ENCODE measurements at regions of chr2 and their contacts with region 1.

Region 1: GRCh38 chr2:204177977-204178540 is 241.5 kb downstream of the ICOS start:
- DNase-seq: peak; percentile 82
- H3K4me3 Mint-ChIP-seq: no peak overlapping the region
- H3K27ac Mint-ChIP-seq: no peak overlapping the region
- H3K4me1 Mint-ChIP-seq: peaks cover 3% of the 10 kb centered on the region
- H3K27me3 Mint-ChIP-seq: peaks cover 8% of the 10 kb centered on the region

Region 2: DNA sequence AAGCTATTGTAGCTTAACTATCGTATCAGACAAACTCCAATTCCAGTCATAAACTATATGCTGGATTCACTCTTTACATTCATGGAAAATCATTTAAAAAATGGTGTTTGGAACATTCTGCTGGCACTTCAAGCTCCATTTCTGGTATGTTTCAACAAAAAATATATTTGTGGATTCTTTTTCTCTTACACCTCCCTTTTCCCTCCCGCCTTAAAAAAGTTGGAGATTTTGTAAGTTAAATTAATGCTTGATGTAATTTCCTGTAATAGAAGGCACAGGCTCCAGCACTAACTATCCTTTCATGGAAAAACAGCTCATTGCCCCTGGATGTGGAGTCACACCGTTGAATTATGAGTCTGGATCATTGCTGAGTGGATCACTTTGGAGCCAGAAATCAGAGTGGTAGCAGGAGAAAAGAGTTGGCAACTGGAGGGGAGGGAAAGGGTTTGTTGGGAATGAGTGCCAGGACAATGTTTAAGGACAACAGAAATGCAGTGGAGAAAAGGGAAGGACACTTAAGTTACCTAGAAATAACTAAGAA is 138.7 kb before region 1 on chr2:
- CTCF ChIA-PET with region 1: interaction called, 12 read pairs
- POLR2A ChIA-PET with region 1: no interaction called
- intact Hi-C with region 1: no loop called
- DNase-seq: no peak
- H3K4me3 Mint-ChIP-seq: no peak overlapping the region
- H3K27ac Mint-ChIP-seq: no peak overlapping the region
- H3K4me1 Mint-ChIP-seq: peaks cover under 1% of the 10 kb centered on the region
- H3K27me3 Mint-ChIP-seq: peaks cover 2% of the 10 kb centered on the region

Region 3: GRCh38 chr2:204081487-204082425 is 96.3 kb before region 1 on chr2:
- CTCF ChIA-PET with region 1: interaction called, 12 read pairs
- POLR2A ChIA-PET with region 1: no interaction called
- intact Hi-C with region 1: no loop called
- DNase-seq: no peak
- H3K4me3 Mint-ChIP-seq: no peak overlapping the region
- H3K27ac Mint-ChIP-seq: no peak overlapping the region
- H3K4me1 Mint-ChIP-seq: peaks cover 2% of the 10 kb centered on the region
- H3K27me3 Mint-ChIP-seq: peaks cover 3% of the 10 kb centered on the region

Region 4: GRCh38 chr2:204140246-204140645 is 37.8 kb before region 1 on chr2:
- CTCF ChIA-PET with region 1: interaction called, 79 read pairs
- POLR2A ChIA-PET with region 1: no interaction called
- intact Hi-C with region 1: loop called (anchors 1 kb)
- DNase-seq: no peak
- H3K4me3 Mint-ChIP-seq: no peak overlapping the region
- H3K27ac Mint-ChIP-seq: no peak overlapping the region
- H3K4me1 Mint-ChIP-seq: peaks cover 5% of the 10 kb centered on the region
- H3K27me3 Mint-ChIP-seq: peaks cover 2% of the 10 kb centered on the region

Region 5: GRCh38 chr2:204152616-204153015 is 25.4 kb before region 1 on chr2:
- CTCF ChIA-PET with region 1: interaction called, 14 read pairs
- POLR2A ChIA-PET with region 1: no interaction called
- intact Hi-C with region 1: no loop called
- DNase-seq: no peak
- H3K4me3 Mint-ChIP-seq: no peak overlapping the region
- H3K27ac Mint-ChIP-seq: no peak overlapping the region
- H3K4me1 Mint-ChIP-seq: no peaks in the 10 kb centered on the region
- H3K27me3 Mint-ChIP-seq: peaks cover 10% of the 10 kb centered on the region

Region 6: GRCh38 chr2:204191574-204192335 is 13.7 kb after region 1 on chr2:
- CTCF ChIA-PET with region 1: interaction called, 36 read pairs
- POLR2A ChIA-PET with region 1: no interaction called
- intact Hi-C with region 1: no loop called
- DNase-seq: no peak
- H3K4me3 Mint-ChIP-seq: no peak overlapping the region
- H3K27ac Mint-ChIP-seq: no peak overlapping the region
- H3K4me1 Mint-ChIP-seq: peaks cover 14% of the 10 kb centered on the region
- H3K27me3 Mint-ChIP-seq: peaks cover 8% of the 10 kb centered on the region